Pancreas (tissue), 10 donors: ENCODE measurements at regions of chr2 and their contacts with region 1.

Region 1: GRCh38 chr2:100984892-100985379 is 17.2 kb upstream of the RPL31 start:
- DNase-seq: peak; percentile 63 to 90 (median 80)
- ATAC-seq: peak; percentile 78 to 94 (median 90)
- H3K4me3 ChIP-seq: no peak overlapping the region
- H3K27ac ChIP-seq: no peak overlapping the region
- H3K4me1 ChIP-seq: no peaks in the 10 kb centered on the region
- H3K27me3 ChIP-seq: no peaks in the 10 kb centered on the region
- CTCF ChIP-seq: peak; percentile 76 to 81 (median 80)

Region 2: DNA sequence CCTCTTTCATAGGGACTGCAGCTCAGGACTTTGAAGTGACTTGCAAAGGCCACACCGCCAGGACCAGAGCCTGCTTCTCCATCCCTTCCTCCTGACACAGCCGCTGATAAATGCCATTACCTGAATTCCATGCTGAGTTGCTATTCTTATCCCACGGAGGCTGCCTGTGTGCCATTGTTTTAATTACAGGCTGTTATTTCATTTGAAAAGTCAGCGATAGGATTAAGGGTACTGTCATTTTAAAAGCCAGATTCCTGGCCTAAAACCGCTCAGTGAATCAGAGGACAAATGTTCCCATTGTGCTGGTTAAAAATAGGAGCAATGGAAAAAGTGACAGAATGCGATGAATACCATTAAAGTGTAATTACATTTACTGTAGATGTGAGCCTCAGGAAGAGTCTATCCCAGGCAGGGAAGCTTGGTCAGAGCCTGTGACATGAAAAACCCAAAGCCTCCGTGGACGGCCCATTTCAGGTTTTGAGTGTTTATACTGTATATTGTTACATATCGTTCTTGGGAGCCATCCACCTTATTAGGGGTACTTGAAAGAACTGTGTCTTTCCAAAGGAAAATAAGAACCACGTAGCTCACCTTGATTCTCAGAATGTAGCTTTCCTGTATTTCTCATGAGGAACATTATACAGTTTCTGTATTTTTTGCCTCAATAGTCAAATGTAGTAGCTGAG is 380.8 kb before region 1 on chr2:
- intact Hi-C with region 1: loop called in 1 of 3 experiments (anchors 5 kb)
- DNase-seq: no peak
- ATAC-seq: no peak
- H3K4me3 ChIP-seq: no peak overlapping the region
- H3K27ac ChIP-seq: no peak overlapping the region
- H3K4me1 ChIP-seq: no peaks in the 10 kb centered on the region
- H3K27me3 ChIP-seq: no peaks in the 10 kb centered on the region
- CTCF ChIP-seq: no peak

Region 3: GRCh38 chr2:100610381-100610831 is 374.5 kb before region 1 on chr2:
- intact Hi-C with region 1: loop called in 1 of 3 experiments (anchors 5 kb)
- DNase-seq: peak; percentile 21 to 86 (median 62)
- ATAC-seq: peak; percentile 76 to 92 (median 85)
- H3K4me3 ChIP-seq: no peak overlapping the region
- H3K27ac ChIP-seq: no peak overlapping the region
- H3K4me1 ChIP-seq: no peaks in the 10 kb centered on the region
- H3K27me3 ChIP-seq: no peaks in the 10 kb centered on the region
- CTCF ChIP-seq: peak; percentile 9 to 45 (median 34)

Region 4: DNA sequence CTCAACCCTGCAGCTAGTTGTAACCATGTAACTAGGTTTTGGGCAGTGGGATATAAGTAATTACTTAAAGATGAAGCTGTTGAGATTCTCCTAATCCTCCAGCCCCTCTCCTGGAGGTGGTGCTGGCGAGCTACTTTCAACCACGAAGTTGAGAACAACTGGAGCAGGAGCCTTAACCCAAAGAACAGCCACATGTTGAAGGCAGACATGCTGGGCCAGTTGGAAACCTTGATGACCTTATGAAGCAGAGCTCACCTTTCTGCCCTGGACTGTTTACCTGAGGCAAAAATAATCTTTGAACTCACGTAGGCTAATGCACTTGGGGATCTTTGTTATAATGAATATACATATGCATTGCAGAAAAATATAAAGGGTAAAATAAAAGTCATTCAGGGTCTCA is 254.6 kb before region 1 on chr2:
- intact Hi-C with region 1: loop called in 2 of 3 experiments (anchors 5 to 10 kb)
- DNase-seq: peak in 5 of 6 donors; percentile 35 to 75 (median 63)
- ATAC-seq: peak; percentile 73 to 96 (median 92)
- H3K4me3 ChIP-seq: no peak overlapping the region
- H3K27ac ChIP-seq: no peak overlapping the region
- H3K4me1 ChIP-seq: no peaks in the 10 kb centered on the region
- H3K27me3 ChIP-seq: no peaks in the 10 kb centered on the region
- CTCF ChIP-seq: peak in 3 of 4 donors; percentile 14 to 39 (median 35)

Region 5: GRCh38 chr2:100875516-100876230 is 109.3 kb before region 1 on chr2:
- intact Hi-C with region 1: no loop called
- DNase-seq: peak in 4 of 6 donors; percentile 39 to 72 (median 54)
- ATAC-seq: peak; percentile 53 to 79 (median 74)
- H3K4me3 ChIP-seq: no peak overlapping the region
- H3K27ac ChIP-seq: peak overlapping the region in 3 of 4 donors; percentile 17 to 82 (median 73)
- H3K4me1 ChIP-seq: peaks cover 11 to 28% (median 28%) of the 10 kb centered on the region in 3 donors
- H3K27me3 ChIP-seq: no peaks in the 10 kb centered on the region
- CTCF ChIP-seq: no peak

Region 6: DNA sequence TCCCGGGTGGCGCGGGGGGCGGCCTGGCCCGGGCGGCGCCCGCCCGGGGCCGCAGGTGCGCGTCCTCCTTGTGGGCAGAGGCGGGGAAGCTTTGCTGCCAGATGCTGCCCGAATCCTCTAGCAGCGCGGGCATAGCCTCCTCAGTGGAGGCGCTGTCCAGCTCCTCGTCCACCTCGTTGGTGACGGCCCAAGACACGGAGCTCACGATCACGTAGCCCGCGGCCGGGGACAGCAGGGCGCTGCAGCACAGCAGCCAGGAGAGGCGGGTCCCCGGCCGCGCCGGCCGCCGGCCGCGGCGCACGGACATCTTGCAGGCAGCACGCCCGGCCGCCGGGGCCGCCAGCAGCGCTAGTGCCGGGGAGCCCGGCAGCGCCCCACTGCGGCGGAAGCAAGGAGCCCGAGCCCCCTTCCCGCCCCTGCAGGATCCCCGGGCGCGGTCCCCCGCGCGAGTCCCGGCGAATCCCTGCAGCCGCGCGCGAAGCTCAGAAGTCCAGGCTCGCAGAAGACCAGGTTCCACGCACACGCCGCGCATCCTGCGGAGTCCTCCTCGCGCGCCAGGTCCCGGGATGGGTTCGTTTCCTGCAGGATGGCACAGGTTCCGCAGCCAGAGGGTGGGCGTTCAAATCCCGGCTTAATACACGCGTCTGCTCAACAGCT is 402.3 kb after region 1 on chr2 and contains the start of gene CREG2:
- intact Hi-C with region 1: no loop called
- DNase-seq: peak; percentile 49 to 88 (median 66)
- ATAC-seq: peak; percentile 88 to 96 (median 94)
- H3K4me3 ChIP-seq: peak within 1 kb of the TSS; percentile 20 to 54 (median 44)
- H3K27ac ChIP-seq: no peak within 1 kb of the TSS
- H3K4me1 ChIP-seq: peaks cover 0 to 5% (median 0%) of the 10 kb centered on the region in 3 donors
- H3K27me3 ChIP-seq: peaks cover 0 to 12% (median 2%) of the 10 kb centered on the region in 4 donors
- CTCF ChIP-seq: peak; percentile 14 to 54 (median 42)
- total RNA-seq, gene CREG2: 0.12 to 0.19 TPM in 2 of 6 donors, not detected in the others